OCI-LY7 (cell line): ENCODE measurements at regions of chr3 and their contacts with region 1.

Region 1: DNA sequence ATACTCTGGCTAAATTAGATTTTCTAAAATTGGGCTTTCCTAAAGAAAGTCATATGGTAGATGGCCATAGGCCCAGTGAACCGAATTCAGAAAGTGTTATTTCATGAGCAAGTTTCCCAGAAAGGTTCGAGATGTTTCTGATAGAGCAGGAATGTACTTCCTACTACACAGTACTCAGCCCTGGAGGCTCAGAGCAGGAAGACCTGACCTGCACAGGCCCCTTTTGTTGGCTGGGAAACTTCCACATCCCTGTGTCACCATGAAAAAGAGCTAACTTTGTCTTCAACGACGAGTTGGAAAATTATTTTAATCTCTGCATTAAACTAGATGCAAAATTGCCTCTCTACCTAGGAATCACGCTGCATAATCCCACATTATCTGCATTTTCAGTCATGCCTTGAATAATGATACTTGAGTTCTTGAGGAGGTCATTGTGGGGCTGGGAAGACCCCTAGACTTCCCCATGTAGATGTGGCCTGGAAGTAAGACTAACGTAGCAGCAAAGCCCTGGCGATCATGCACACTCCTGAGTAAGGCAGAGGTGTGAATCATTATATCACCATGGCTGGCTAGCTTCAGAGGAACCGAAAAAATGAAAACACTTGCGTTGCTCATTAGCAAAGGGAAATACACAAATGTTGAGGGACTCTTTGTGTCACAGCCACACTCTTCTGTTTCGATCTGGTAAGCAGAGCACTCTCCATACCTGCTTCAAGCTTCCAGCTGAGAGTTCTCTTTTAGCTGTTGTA is 47.1 kb downstream of the CMTM7 start:
- DNase-seq: peak; percentile 86
- H3K4me3 ChIP-seq: peak overlapping the region; percentile 35
- H3K27ac ChIP-seq: peak overlapping the region; percentile 75
- H3K4me1 ChIP-seq: peaks cover 85% of the 10 kb centered on the region
- CTCF ChIP-seq: no peak

Region 2: GRCh38 chr3:30606301-30607031 is 1832.3 kb before region 1 on chr3 and contains the start of gene TGFBR2:
- CTCF ChIA-PET with region 1: no interaction called
- POLR2A ChIA-PET with region 1: no interaction called
- intact Hi-C with region 1: loop called (anchors 10 kb)
- DNase-seq: peak; percentile 91
- H3K4me3 ChIP-seq: peak within 1 kb of the TSS; percentile 94
- H3K27ac ChIP-seq: peak within 1 kb of the TSS; percentile 93
- H3K4me1 ChIP-seq: peaks cover 72% of the 10 kb centered on the region
- CTCF ChIP-seq: no peak; the same call in 1 of the 2 replicates
- total RNA-seq, gene TGFBR2: 28.1 and 29.6 TPM in 2 replicates

Region 3: GRCh38 chr3:32391643-32392535 is 46.9 kb before region 1 on chr3 and contains the start of gene CMTM7:
- CTCF ChIA-PET with region 1: no interaction called
- POLR2A ChIA-PET with region 1: interaction called, 4 read pairs
- intact Hi-C with region 1: loop called (anchors 2 kb)
- DNase-seq: peak; percentile 68
- H3K4me3 ChIP-seq: peak within 1 kb of the TSS; percentile 87
- H3K27ac ChIP-seq: peak within 1 kb of the TSS; percentile 48
- H3K4me1 ChIP-seq: peaks cover 68% of the 10 kb centered on the region
- CTCF ChIP-seq: no peak
- total RNA-seq, gene CMTM7: 13.2 and 16.0 TPM in 2 replicates

Region 4: DNA sequence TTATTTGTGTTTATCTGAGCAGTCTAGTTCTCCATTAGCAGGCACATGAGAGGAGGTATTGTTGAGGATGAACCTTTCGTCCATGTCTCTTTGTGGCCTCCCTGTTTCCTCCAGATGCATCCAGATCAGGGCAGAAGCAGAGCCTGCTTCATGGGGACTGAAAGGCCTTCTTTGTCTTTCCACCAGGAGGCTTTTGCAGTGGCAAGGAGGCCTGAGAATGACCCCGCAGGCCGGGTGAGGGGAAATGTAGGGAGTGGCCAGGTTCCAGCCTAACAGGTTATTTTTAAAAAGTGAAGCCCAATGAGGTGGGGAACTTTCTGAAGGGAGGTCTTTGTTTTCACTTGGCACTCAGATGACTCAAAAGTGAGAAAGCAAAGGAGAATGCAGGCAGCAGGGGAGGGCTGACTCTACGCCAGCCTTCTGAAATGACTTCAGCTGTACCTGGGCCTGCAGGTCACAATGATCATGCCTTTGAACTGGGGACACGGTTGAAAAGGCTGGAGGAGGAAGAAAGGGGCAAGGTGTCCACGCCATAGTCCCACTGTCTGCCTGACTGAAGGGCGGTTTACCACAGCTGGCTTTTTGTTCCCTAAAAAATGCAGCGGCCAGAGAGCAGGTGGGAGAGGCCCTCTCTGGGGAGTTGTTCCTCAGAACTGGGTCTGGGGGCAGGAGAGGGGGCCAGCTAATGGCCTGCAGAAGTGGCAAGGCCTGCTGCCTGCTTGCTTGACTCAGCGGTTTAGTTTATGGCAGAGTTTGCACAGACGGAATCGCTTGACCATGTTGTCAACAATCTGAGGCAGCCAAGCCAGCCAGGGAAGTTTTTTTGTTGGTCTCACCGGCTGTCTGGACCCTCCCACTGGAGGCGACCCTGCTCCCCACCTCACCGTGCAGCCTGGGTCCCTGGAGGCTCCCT is 18.4 kb before region 1 on chr3:
- CTCF ChIA-PET with region 1: interaction called, 12 read pairs
- POLR2A ChIA-PET with region 1: interaction called, 88 read pairs
- intact Hi-C with region 1: loop called (anchors 1 kb)
- DNase-seq: peak; percentile 74
- H3K4me3 ChIP-seq: peak overlapping the region; percentile 47
- H3K27ac ChIP-seq: peak overlapping the region; percentile 90
- H3K4me1 ChIP-seq: peaks cover 78% of the 10 kb centered on the region
- CTCF ChIP-seq: no peak

Region 5: DNA sequence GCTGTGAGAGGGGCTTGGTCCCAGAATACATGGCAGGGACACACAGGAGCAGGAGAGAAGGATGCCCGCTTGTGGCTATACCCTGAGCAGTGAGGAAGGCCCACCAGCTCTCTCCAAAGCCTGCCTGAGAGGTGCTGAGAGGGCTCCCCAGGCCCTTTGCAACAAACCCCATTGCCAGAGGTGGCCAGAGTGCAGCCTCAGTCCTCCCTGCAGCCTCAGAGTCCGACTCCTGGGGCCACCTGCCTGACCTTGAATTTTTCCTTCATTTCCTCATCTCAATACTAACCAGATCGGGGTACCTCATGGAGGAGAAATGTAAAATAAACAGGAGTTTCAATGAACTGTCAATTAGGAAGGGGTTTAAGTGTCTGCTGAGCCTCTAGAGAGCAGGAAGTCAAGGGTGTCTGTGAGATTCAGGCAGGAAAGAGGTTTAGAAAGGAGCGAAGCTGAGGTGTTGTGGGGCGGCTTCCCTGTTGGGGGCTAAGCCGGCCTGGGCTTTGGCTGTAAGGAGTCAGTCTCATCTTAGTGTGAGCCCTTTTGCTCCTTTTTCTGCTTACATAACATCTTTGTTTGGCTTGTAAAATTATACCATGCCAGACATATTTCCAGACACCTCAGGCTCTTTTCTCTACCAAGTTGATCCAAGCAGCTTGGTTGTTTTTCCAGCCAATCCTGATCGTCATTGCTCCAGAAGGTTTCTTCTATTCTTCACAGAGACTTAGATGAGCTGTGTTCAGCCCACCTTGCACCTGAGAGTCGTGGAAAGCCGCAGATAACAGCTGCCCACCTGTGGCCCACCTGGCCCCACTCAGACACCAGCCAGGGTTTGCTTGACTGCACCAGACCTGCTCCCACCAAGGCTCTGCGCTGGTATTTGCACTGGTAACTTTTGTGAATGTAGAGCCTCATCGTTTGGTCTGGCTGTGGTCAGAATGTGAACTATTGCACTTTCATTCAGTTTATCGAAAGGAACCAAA is 10.4 kb before region 1 on chr3:
- CTCF ChIA-PET with region 1: interaction called, 12 read pairs
- POLR2A ChIA-PET with region 1: interaction called, 88 read pairs
- intact Hi-C with region 1: loop called (anchors 1 kb)
- DNase-seq: peak; percentile 87
- H3K4me3 ChIP-seq: peak overlapping the region; percentile 45
- H3K27ac ChIP-seq: peak overlapping the region; percentile 82
- H3K4me1 ChIP-seq: peaks cover 94% of the 10 kb centered on the region
- CTCF ChIP-seq: no peak

Region 6: GRCh38 chr3:32448686-32449474 is 10.1 kb after region 1 on chr3:
- CTCF ChIA-PET with region 1: interaction called, 3 read pairs
- POLR2A ChIA-PET with region 1: interaction called, 101 read pairs
- intact Hi-C with region 1: no loop called
- DNase-seq: no peak
- H3K4me3 ChIP-seq: no peak overlapping the region
- H3K27ac ChIP-seq: no peak overlapping the region
- H3K4me1 ChIP-seq: peaks cover 27% of the 10 kb centered on the region
- CTCF ChIP-seq: no peak

Region 7: DNA sequence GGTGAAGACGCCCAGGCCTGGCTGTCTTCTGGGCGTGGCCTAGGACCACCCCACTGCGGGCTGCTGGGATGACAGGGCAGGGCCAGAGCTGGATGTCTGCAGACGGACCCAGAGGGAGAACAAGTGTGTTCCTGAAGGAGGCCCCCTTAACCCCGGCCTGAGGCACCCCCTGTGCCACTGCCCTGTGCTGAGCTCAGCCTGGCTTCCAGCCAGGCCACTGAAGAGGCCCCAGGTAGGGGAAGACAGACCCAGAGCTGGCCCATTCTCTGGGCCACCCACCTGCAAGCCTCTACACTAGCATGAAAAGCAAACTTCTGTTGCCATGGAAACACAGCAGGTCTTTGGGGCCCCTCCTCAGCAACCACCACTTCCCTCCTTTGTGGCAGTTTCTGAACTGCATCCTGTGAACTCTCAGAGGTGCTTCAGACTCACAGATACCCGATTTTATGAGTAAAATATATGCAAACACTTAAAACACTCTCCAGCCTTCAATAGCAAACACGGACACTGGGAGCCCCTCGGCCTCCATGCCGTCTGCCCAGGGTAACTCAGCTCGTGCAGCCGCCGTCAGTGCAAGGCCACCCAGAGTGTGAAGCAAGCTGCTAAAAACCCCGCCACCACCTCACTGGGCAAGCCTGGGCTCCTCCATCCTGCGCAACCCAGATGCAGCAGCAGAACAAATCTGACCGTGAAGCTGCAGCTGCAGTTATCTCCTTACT is 21.4 kb after region 1 on chr3:
- CTCF ChIA-PET with region 1: interaction called, 4 read pairs
- POLR2A ChIA-PET with region 1: interaction called, 101 read pairs
- intact Hi-C with region 1: loop called (anchors 2 kb)
- DNase-seq: peak; percentile 94
- H3K4me3 ChIP-seq: peak overlapping the region; percentile 51
- H3K27ac ChIP-seq: peak overlapping the region; percentile 71
- H3K4me1 ChIP-seq: peaks cover 64% of the 10 kb centered on the region
- CTCF ChIP-seq: no peak

Region 8: DNA sequence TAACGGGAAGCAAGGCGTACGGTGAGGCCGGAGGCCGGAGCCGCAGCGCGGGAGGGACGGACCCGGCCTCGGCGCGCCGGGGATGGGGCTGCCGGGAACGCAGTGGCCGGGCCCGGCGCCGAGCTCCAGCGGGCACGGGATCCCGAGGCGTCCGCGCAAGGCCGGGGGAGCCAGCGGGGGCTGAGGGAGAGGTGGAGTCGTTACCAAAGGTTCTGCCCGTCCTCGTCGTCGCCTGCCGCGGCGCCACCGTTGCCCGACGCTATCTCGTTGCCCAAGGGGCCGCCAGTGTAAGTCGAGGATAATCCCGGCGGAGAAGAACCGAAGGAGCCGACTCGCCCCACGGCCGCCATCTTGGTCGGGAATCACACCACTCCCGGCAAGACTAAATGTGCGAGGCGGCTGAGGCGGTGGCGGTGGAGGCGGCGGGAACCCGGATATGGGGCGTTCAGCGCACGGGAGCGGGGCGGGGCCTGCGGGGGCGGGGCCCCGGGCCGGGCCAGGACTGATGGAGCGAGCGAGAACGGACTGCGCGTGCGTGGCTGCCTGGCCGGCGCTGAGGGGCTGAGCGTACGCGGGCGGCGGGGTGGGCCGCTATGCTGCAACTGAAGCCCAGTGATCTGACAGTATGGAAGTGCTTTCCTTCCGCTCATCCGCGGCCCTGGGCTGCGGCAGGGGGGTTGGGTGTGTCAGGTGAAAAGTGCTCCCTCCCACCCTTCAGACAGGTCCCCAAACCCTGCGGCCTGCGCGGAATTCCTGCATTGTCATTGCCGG is 131.8 kb after region 1 on chr3 and contains the start of gene DYNC1LI1:
- CTCF ChIA-PET with region 1: no interaction called
- POLR2A ChIA-PET with region 1: no interaction called
- intact Hi-C with region 1: no loop called
- DNase-seq: peak; percentile 93
- H3K4me3 ChIP-seq: peak within 1 kb of the TSS; percentile 81
- H3K27ac ChIP-seq: peak within 1 kb of the TSS; percentile 64
- H3K4me1 ChIP-seq: peaks cover 23% of the 10 kb centered on the region
- CTCF ChIP-seq: no peak
- total RNA-seq, gene DYNC1LI1: 28.6 TPM in 2 replicates